MCF 10A (cell line): ENCODE measurements at regions of chr12 and their contacts with region 1.

Region 1: DNA sequence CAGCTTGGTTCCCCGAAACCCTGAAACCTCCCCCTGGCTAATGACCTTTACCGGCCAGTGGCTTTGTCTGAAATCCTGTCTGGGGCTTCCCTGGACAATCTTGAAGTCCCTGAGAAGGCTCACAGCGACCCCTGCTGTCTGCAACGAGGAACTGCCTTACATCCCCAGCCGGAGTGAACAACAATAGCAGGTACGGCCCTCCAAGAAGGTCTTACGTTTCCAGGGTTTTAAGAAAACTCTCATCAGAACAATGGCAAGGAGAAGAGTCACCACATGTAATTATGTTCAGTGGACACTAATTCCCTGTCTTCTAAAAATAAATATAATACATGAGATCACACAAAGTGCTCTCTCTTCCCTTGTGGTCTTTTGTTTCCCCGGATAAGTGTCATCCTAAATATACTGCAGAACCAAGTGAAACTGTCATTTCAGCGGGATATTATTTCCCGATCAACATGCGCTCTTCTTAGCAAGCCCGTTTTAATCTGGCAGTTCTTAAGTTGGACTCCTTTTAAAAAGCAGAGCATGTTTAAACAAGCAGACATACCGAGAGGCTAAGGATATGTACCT is 53.3 kb downstream of the RBM19 start:
- DNase-seq: peak; percentile 58
- H3K4me3 Mint-ChIP-seq: no peak overlapping the region
- H3K27ac Mint-ChIP-seq: no peak overlapping the region
- H3K4me1 Mint-ChIP-seq: no peaks in the 10 kb centered on the region
- H3K27me3 Mint-ChIP-seq: no peaks in the 10 kb centered on the region
- CTCF ChIP-seq: peak; percentile 94

Region 2: GRCh38 chr12:113310489-113310888 is 602.4 kb before region 1 on chr12:
- CTCF ChIA-PET with region 1: interaction called, 7 read pairs
- POLR2A ChIA-PET with region 1: no interaction called
- intact Hi-C with region 1: loop called (anchors 1 kb)
- DNase-seq: peak; percentile 30
- H3K4me3 Mint-ChIP-seq: no peak overlapping the region
- H3K27ac Mint-ChIP-seq: no peak overlapping the region
- H3K4me1 Mint-ChIP-seq: peaks cover 5% of the 10 kb centered on the region
- H3K27me3 Mint-ChIP-seq: no peaks in the 10 kb centered on the region
- CTCF ChIP-seq: peak; percentile 18

Region 3: GRCh38 chr12:113439606-113440030 is 473.2 kb before region 1 on chr12:
- CTCF ChIA-PET with region 1: interaction called, 3 read pairs
- POLR2A ChIA-PET with region 1: no interaction called
- intact Hi-C with region 1: loop called (anchors 1 kb)
- DNase-seq: peak; percentile 54
- H3K4me3 Mint-ChIP-seq: no peak overlapping the region
- H3K27ac Mint-ChIP-seq: no peak overlapping the region
- H3K4me1 Mint-ChIP-seq: no peaks in the 10 kb centered on the region
- H3K27me3 Mint-ChIP-seq: no peaks in the 10 kb centered on the region
- CTCF ChIP-seq: peak; percentile 58

Region 4: DNA sequence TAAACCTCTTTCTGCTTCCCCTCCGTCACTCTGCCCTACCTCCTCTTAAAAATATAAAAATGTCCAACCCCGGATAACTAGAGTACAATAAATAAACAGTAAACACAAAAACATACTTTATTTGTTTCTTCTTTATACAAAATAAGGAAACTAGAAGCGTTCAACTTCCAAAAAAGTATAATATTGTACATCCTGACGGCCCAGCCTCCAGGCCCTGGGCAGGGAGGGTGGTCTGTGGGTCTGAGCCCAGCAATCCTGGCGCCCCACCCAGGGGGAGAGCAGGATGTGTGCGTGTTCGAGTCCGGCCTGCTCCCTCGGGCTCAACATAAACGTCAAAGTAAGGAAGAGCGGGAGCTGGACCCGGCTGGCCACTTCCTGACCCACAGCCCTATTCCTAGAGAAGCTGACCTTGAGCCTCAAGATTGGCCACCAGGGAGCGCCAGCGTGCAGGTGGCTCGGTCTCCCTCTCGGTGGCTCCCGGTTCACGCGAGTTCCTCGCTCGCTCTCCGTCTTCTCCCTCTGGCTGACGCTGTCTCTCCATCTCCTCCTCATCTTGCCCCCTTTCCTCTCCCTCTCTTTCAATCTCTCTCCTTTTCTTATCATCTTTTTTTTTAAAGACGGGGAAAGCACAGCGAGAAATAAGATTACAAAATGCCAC is 450.6 kb before region 1 on chr12:
- CTCF ChIA-PET with region 1: interaction called, 6 read pairs
- POLR2A ChIA-PET with region 1: no interaction called
- intact Hi-C with region 1: loop called (anchors 1 kb)
- DNase-seq: peak; percentile 71
- H3K4me3 Mint-ChIP-seq: peak overlapping the region; percentile 67
- H3K27ac Mint-ChIP-seq: no peak overlapping the region
- H3K4me1 Mint-ChIP-seq: peaks cover 6% of the 10 kb centered on the region
- H3K27me3 Mint-ChIP-seq: peaks cover 83% of the 10 kb centered on the region
- CTCF ChIP-seq: peak; percentile 94

Region 5: DNA sequence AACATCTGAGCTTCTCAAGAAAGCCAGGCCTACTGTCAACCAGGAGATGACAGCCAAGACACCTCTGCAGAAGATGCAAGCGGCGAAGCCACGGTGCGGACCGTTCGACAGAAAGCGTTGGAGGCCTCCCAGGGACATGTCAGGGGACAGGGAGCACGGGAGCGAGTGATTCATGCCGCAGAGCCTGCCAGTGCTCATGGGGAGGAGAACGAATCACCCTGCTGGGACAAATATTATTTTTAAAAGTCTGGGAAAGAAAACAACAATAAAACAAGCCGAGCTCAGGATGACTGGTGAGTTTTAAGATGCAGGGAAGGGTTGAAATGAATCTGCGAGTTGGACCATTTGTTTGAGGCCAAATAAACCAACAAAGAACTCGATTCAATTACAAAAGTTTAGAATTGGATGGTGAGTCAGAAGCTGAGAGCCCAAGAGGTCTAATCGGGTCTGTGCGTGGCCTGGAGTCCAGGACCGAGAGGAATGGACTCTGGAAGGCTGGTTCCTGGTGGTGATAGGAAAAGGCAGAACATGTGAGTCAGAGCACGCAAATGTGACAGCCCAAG is 37.8 kb before region 1 on chr12:
- CTCF ChIA-PET with region 1: no interaction called
- POLR2A ChIA-PET with region 1: no interaction called
- intact Hi-C with region 1: no loop called
- DNase-seq: no peak
- H3K4me3 Mint-ChIP-seq: no peak overlapping the region
- H3K27ac Mint-ChIP-seq: no peak overlapping the region
- H3K4me1 Mint-ChIP-seq: no peaks in the 10 kb centered on the region
- H3K27me3 Mint-ChIP-seq: no peaks in the 10 kb centered on the region
- CTCF ChIP-seq: no peak